Heart left ventricle (tissue), 16 donors: ENCODE measurements at regions of chr1 and their contacts with region 1.

Region 1: DNA sequence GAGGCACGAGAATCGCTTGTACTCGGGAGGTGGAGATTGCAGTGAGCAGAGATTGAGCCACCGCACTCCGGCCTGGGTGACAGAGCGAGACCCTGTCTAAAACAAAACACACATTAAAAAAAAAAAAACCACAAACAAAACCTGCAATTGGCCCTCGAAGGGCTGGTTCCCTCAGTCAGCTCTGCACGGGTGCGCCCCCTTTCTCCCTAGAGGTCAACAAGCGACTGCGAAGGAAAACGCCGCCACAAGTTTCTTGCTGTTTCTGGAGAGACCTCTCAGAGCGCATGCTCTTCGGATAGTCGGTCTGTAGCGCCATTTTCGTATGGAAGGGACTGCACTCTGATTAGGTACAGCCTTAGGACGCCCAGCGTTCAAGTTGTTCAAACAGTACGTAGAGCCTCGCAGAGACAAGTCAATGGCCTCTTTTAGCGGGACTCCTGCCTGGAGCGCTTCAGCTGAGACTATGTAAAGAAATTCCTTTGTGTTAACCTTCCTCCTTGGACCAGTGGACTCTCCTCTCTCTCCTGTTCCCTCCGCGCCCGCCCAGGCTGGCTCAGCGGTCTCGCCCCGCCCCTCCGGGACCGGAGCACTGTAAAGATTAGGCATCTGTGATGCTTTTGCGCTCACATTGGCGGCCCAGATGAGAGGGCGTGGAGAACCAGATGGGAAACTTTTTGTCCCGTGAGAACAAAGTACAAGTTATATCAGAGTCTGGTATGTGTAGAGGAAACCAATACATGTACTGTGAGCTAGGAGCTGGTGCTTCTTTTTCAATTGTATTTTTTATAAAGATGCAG is 1.0 kb upstream of the CDC14A start:
- DNase-seq: peak; percentile 85 to 91 (median 88)
- ATAC-seq: peak; percentile 80 to 85 (median 82)
- H3K4me3 ChIP-seq: peak overlapping the region; percentile 66 to 99 (median 86)
- H3K27ac ChIP-seq: peak overlapping the region; percentile 22 to 98 (median 92)
- H3K4me1 ChIP-seq: peaks cover 0 to 35% (median 20%) of the 10 kb centered on the region in 12 donors
- H3K27me3 ChIP-seq: no peaks in the 10 kb centered on the region
- CTCF ChIP-seq: peak in 10 of 12 donors; percentile 20 to 61 (median 42)
- POLR2A ChIP-seq: peak in 1 of 2 donors; percentile 44

Region 2: GRCh38 chr1:99872063-99872462 is 479.2 kb before region 1 on chr1:
- intact Hi-C with region 1: no loop called
- DNase-seq: no peak
- ATAC-seq: no peak
- H3K4me3 ChIP-seq: no peak overlapping the region
- H3K27ac ChIP-seq: no peak overlapping the region
- H3K4me1 ChIP-seq: no peaks in the 10 kb centered on the region
- H3K27me3 ChIP-seq: no peaks in the 10 kb centered on the region
- CTCF ChIP-seq: no peak
- POLR2A ChIP-seq: no peak

Region 3: GRCh38 chr1:100249537-100250257 is 101.6 kb before region 1 on chr1 and contains the start of gene DBT:
- intact Hi-C with region 1: loop called in 1 of 10 experiments (anchors 5 kb)
- DNase-seq: peak; percentile 94 to 97 (median 95)
- ATAC-seq: peak; percentile 100
- H3K4me3 ChIP-seq: peak within 1 kb of the TSS; percentile 74 to 97 (median 83)
- H3K27ac ChIP-seq: peak within 1 kb of the TSS; percentile 75 to 95 (median 86)
- H3K4me1 ChIP-seq: peaks cover 0 to 30% (median 17%) of the 10 kb centered on the region in 12 donors
- H3K27me3 ChIP-seq: no peaks in the 10 kb centered on the region
- CTCF ChIP-seq: no peak
- POLR2A ChIP-seq: peak; percentile 18 to 88
- total RNA-seq, gene DBT: 15.6 to 45.3 (median 29.8) TPM

Region 4: DNA sequence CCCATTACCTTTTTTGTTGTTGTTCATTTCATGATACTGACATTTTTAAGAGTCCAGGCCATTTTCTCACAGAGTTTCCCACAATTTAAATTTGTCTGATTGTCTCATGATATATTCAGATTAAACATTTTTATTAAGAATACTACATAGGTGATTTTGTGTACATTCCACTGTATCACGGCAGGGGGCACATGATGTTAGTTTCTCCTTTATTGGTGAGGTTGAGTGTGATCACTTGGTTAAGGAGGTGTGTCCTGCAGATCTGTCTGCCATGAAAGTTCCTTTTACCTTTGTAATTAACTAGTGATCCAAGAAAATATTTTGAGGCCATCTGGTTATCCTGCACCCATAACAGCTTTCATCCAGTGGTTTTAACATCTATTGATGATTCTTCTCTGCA is 73.4 kb before region 1 on chr1:
- intact Hi-C with region 1: loop called in 1 of 10 experiments (anchors 5 kb)
- DNase-seq: no peak
- ATAC-seq: no peak
- H3K4me3 ChIP-seq: no peak overlapping the region
- H3K27ac ChIP-seq: no peak overlapping the region
- H3K4me1 ChIP-seq: peaks cover 0 to 14% (median 3%) of the 10 kb centered on the region in 12 donors
- H3K27me3 ChIP-seq: no peaks in the 10 kb centered on the region
- CTCF ChIP-seq: no peak
- POLR2A ChIP-seq: no peak

Region 5: DNA sequence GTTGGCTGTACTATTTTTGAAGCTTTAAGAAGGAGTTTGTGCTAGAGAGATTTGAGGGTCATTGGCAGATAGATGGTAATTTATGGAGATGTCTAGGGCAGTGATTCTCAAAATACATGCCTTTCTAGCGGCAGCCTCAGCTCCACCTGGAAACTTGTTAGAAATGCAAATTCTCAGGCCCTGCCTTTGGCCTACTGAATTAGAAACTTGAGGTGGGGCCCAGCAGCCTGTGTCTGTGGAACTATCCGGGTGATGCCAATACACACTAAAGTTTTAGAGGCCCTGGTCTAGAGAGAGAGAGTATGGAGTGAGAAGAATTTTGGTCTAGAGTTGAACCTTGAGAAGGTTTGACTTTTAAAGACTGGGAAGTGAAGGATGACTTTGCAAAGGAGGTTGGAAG is 83.5 kb after region 1 on chr1:
- intact Hi-C with region 1: loop called in 7 of 10 experiments (anchors 5 to 10 kb)
- DNase-seq: no peak
- ATAC-seq: no peak
- H3K4me3 ChIP-seq: no peak overlapping the region
- H3K27ac ChIP-seq: no peak overlapping the region
- H3K4me1 ChIP-seq: peaks cover 0 to 14% (median 1%) of the 10 kb centered on the region in 12 donors
- H3K27me3 ChIP-seq: no peaks in the 10 kb centered on the region
- CTCF ChIP-seq: no peak
- POLR2A ChIP-seq: no peak

Region 6: DNA sequence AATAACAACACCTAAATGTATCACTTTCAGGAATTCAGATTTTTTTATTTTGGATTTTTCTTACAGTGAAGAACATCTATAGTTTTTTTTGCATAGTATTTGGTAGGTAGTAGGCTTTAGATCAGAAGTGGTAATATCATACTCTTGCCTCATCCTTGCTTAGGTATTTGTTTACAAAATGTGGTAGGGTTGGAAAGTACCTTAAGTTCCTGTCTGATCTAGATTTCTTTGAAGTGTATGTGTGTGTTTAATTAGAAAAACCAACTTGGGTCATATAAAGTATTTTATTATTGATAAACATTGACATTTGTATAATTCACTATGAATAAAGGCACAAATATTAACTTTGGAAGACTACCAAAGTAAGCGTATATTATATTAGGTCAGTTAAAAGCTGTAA is 101.3 kb after region 1 on chr1:
- intact Hi-C with region 1: loop called in 6 of 10 experiments (anchors 5 to 10 kb)
- DNase-seq: no peak
- ATAC-seq: no peak
- H3K4me3 ChIP-seq: no peak overlapping the region
- H3K27ac ChIP-seq: peak overlapping the region in 1 of 12 donors; percentile 43
- H3K4me1 ChIP-seq: peaks cover 0 to 16% (median 0%) of the 10 kb centered on the region in 12 donors
- H3K27me3 ChIP-seq: no peaks in the 10 kb centered on the region
- CTCF ChIP-seq: no peak
- POLR2A ChIP-seq: no peak